ENCODE measurements at regions of chr5 and their contacts with region 1.

Region 1: GRCh38 chr5:109803854-109804253 is 114.1 kb downstream of the MAN2A1 start:
- DNase-seq: no peak
- ATAC-seq: no peak
- H3K4me3 ChIP-seq: no peak overlapping the region
- H3K4me3 Mint-ChIP-seq: no peak overlapping the region
- H3K27ac ChIP-seq: no peak overlapping the region
- H3K27ac Mint-ChIP-seq: no peak overlapping the region
- H3K4me1 ChIP-seq: no peaks in the 10 kb centered on the region
- H3K4me1 Mint-ChIP-seq: peaks cover 15% of the 10 kb centered on the region
- H3K27me3 ChIP-seq: no peaks in the 10 kb centered on the region
- H3K27me3 Mint-ChIP-seq: no peaks in the 10 kb centered on the region
- CTCF ChIP-seq: no peak

Region 2: GRCh38 chr5:109762821-109763220 is 41.0 kb before region 1 on chr5:
- CTCF ChIA-PET with region 1: no interaction called
- POLR2A ChIA-PET with region 1: no interaction called
- intact Hi-C with region 1: loop called in 1 of 2 experiments (anchors 5 kb)
- DNase-seq: no peak
- ATAC-seq: no peak
- H3K4me3 ChIP-seq: no peak overlapping the region
- H3K4me3 Mint-ChIP-seq: no peak overlapping the region
- H3K27ac ChIP-seq: no peak overlapping the region
- H3K27ac Mint-ChIP-seq: no peak overlapping the region
- H3K4me1 ChIP-seq: no peaks in the 10 kb centered on the region
- H3K4me1 Mint-ChIP-seq: peaks cover 40% of the 10 kb centered on the region
- H3K27me3 ChIP-seq: no peaks in the 10 kb centered on the region
- H3K27me3 Mint-ChIP-seq: no peaks in the 10 kb centered on the region
- CTCF ChIP-seq: no peak

Region 3: DNA sequence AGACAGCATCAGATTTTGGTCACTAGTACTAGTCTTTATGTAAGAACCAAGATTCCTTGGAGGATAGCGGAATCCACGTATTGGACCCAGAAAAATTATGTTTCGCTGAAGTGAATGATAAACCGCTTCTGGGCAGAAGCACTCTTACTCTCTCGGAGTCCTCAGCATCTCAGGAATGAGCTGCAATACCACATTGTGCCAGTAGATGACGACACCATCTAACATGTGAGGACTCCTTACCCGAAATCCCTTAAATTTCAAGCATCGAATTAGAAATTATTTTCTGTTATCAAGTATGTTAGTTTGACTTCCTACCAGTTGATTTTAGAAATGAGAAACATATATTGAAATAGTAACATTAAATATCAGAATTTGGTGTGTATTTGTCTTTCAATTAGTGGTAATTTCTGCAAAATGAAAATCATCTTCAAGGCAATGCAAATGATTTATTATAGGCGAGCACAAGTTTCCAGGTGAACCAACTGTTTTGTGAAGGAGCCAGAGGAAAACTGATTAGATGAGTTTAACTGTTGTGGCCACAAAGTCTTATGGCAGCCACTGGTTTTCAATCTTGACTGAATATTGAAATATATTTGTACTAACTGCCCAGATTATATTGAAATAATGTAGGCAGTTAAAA is 1354.4 kb after region 1 on chr5:
- CTCF ChIA-PET with region 1: no interaction called
- POLR2A ChIA-PET with region 1: no interaction called
- intact Hi-C with region 1: no loop called
- DNase-seq: peak; percentile 59 to 87 (median 83)
- ATAC-seq: peak; percentile 99
- H3K4me3 ChIP-seq: no peak overlapping the region
- H3K4me3 Mint-ChIP-seq: no peak overlapping the region
- H3K27ac ChIP-seq: no peak overlapping the region
- H3K27ac Mint-ChIP-seq: no peak overlapping the region
- H3K4me1 ChIP-seq: no peaks in the 10 kb centered on the region
- H3K4me1 Mint-ChIP-seq: peaks cover 3% of the 10 kb centered on the region
- H3K27me3 ChIP-seq: no peaks in the 10 kb centered on the region
- H3K27me3 Mint-ChIP-seq: peaks cover 3% of the 10 kb centered on the region
- CTCF ChIP-seq: peak; percentile 100

Measured in CD8-positive, alpha-beta T cell (primary cell).